ENCODE measurements at regions of chr4 and their contacts with region 1.

Region 1: GRCh38 chr4:139301113-139301820 is at the start of gene NAA15:
- DNase-seq: peak; percentile 98 to 99 (median 99)
- H3K4me3 ChIP-seq: peak within 1 kb of the TSS; percentile 84 to 99 (median 97)
- H3K27ac ChIP-seq: peak within 1 kb of the TSS; percentile 89 to 96
- H3K4me1 ChIP-seq: peaks cover 18 to 35% (median 24%) of the 10 kb centered on the region in 4 experiments
- H3K27me3 ChIP-seq: no peaks in the 10 kb centered on the region

Region 2: GRCh38 chr4:139177868-139178611 is 123.2 kb before region 1 on chr4:
- CTCF ChIA-PET with region 1: interaction called, 12 read pairs
- POLR2A ChIA-PET with region 1: interaction called, 15 read pairs
- DNase-seq: peak; percentile 94 to 97 (median 97)
- H3K4me3 ChIP-seq: peak overlapping the region; percentile 82 to 99 (median 93)
- H3K27ac ChIP-seq: peak overlapping the region; percentile 80 to 93
- H3K4me1 ChIP-seq: peaks cover 12 to 26% (median 21%) of the 10 kb centered on the region in 4 experiments
- H3K27me3 ChIP-seq: no peaks in the 10 kb centered on the region

Region 3: DNA sequence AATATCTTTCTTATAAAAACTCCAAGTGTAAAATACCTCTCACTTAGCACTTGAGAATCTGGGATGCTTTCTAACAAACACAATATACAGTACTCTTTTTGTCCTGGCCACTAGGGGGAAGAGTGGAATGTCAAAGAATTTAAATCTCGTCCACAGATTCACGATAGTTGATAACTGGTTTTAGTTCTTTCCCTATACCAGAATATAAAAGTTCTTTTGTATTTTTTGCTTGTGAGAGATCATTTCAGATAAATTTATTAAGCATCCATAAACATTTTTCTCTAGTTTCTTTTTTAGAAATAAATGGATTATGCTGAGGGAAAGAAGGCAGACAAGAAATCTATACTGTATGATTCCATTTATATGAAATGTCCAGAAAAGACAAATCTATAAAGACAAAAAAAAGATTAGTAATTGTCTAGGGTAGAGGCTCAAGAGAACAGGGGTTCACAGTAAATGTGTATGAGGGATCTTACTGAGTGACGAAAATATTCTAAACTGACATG is 71.7 kb before region 1 on chr4:
- CTCF ChIA-PET with region 1: interaction called, 19 read pairs
- POLR2A ChIA-PET with region 1: no interaction called
- DNase-seq: peak; percentile 48 to 72 (median 71)
- H3K4me3 ChIP-seq: no peak overlapping the region
- H3K27ac ChIP-seq: no peak overlapping the region
- H3K4me1 ChIP-seq: peaks cover 0 to 8% (median 0%) of the 10 kb centered on the region in 4 experiments
- H3K27me3 ChIP-seq: no peaks in the 10 kb centered on the region

Region 4: GRCh38 chr4:139279760-139280620 is 21.3 kb before region 1 on chr4 and contains the start of gene MGARP:
- CTCF ChIA-PET with region 1: interaction called, 20 read pairs
- POLR2A ChIA-PET with region 1: interaction called, 3 read pairs
- DNase-seq: peak in 2 of 3 donors; percentile 43 to 57
- H3K4me3 ChIP-seq: peak within 1 kb of the TSS; percentile 8 to 72 (median 58)
- H3K27ac ChIP-seq: no peak within 1 kb of the TSS
- H3K4me1 ChIP-seq: peaks cover 6 to 20% (median 13%) of the 10 kb centered on the region in 4 experiments
- H3K27me3 ChIP-seq: peaks cover 16 to 61% (median 20%) of the 10 kb centered on the region in 5 experiments

Region 5: GRCh38 chr4:139312552-139313332 is 11.5 kb after region 1 on chr4:
- CTCF ChIA-PET with region 1: interaction called, 21 read pairs
- POLR2A ChIA-PET with region 1: interaction called, 6 read pairs
- DNase-seq: peak; percentile 19 to 44 (median 35)
- H3K4me3 ChIP-seq: peak overlapping the region in 1 of 7 experiments; percentile 23
- H3K27ac ChIP-seq: peak overlapping the region; percentile 47 to 65
- H3K4me1 ChIP-seq: peaks cover 5 to 37% (median 25%) of the 10 kb centered on the region in 4 experiments
- H3K27me3 ChIP-seq: no peaks in the 10 kb centered on the region

Region 6: DNA sequence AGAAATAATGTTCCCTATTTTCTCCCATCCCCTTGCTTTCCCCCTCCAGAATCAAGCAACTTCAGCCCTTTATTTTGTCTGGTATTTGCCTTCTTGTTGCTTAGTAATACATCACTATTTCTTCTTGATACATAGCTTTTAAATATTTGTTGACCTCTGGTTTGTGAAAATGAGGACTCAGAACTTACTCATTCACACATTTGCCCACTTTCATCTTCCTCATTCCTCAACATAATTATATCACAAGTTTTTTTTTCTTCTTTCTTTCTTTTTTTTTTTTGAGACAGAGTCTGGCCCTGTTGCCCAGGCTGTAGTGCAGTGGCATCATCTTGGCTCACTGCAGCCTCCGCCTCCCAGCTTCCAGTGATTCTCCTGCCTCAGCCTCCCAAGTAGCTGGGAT is 29.9 kb after region 1 on chr4:
- CTCF ChIA-PET with region 1: interaction called, 17 read pairs
- POLR2A ChIA-PET with region 1: no interaction called
- DNase-seq: peak in 2 of 3 donors; percentile 26 to 36
- H3K4me3 ChIP-seq: no peak overlapping the region
- H3K27ac ChIP-seq: no peak overlapping the region
- H3K4me1 ChIP-seq: peaks cover 0 to 5% (median 0%) of the 10 kb centered on the region in 4 experiments
- H3K27me3 ChIP-seq: no peaks in the 10 kb centered on the region